Psoas muscle (tissue), 8 donors: ENCODE measurements at regions of chr22 and their contacts with region 1.

Region 1: GRCh38 chr22:40487663-40488249 is 117.4 kb downstream of the SGSM3 start:
- DNase-seq: no peak
- ATAC-seq: no peak
- H3K4me3 ChIP-seq: no peak overlapping the region
- H3K27ac ChIP-seq: peak overlapping the region; percentile 72
- H3K4me1 ChIP-seq: peaks cover 57% of the 10 kb centered on the region
- H3K27me3 ChIP-seq: no peaks in the 10 kb centered on the region
- CTCF ChIP-seq: peak; percentile 52

Region 2: GRCh38 chr22:40376149-40376548 is 111.6 kb before region 1 on chr22:
- intact Hi-C with region 1: loop called in 1 of 2 experiments (anchors 10 kb)
- DNase-seq: no peak
- ATAC-seq: peak; percentile 38 to 75 (median 68)
- H3K4me3 ChIP-seq: no peak overlapping the region
- H3K27ac ChIP-seq: no peak overlapping the region
- H3K4me1 ChIP-seq: peaks cover 30% of the 10 kb centered on the region
- H3K27me3 ChIP-seq: no peaks in the 10 kb centered on the region
- CTCF ChIP-seq: no peak

Region 3: GRCh38 chr22:40443732-40444131 is 44.0 kb before region 1 on chr22:
- intact Hi-C with region 1: loop called (anchors 2 to 5 kb)
- DNase-seq: peak; percentile 65 to 80
- ATAC-seq: peak; percentile 75 to 94 (median 84)
- H3K4me3 ChIP-seq: no peak overlapping the region
- H3K27ac ChIP-seq: peak overlapping the region; percentile 53
- H3K4me1 ChIP-seq: peaks cover 16% of the 10 kb centered on the region
- H3K27me3 ChIP-seq: no peaks in the 10 kb centered on the region
- CTCF ChIP-seq: no peak

Region 4: DNA sequence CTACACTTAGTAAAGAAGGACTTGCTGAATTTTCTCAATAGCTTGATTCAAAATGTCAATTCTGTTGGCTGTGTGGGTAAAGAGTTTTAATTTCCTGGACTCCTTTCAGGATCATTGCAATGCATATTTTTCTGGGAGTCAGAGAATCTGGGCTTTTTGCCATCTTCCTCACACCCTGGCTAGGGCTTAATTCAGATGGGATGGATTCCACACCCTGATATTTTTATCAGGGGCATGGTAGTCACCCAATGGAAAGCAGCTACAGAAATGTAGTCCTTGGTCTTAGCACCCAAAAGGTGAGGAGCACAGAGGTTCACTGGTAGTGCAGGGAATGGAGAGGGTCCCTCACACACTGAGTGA is 38.1 kb before region 1 on chr22:
- intact Hi-C with region 1: loop called (anchors 2 to 5 kb)
- DNase-seq: no peak
- ATAC-seq: peak in 2 of 4 donors; percentile 15 to 29
- H3K4me3 ChIP-seq: peak overlapping the region; percentile 47
- H3K27ac ChIP-seq: peak overlapping the region; percentile 72
- H3K4me1 ChIP-seq: peaks cover 35% of the 10 kb centered on the region
- H3K27me3 ChIP-seq: no peaks in the 10 kb centered on the region
- CTCF ChIP-seq: no peak